ENCODE measurements at regions of chr3 and their contacts with region 1.

Region 1: GRCh38 chr3:183725387-183725786 is 27.8 kb downstream of the YEATS2 start:
- DNase-seq: no peak
- ATAC-seq: no peak
- H3K4me3 Mint-ChIP-seq: no peak overlapping the region
- H3K27ac Mint-ChIP-seq: no peak overlapping the region
- H3K4me1 Mint-ChIP-seq: no peaks in the 10 kb centered on the region
- H3K27me3 Mint-ChIP-seq: no peaks in the 10 kb centered on the region

Region 2: DNA sequence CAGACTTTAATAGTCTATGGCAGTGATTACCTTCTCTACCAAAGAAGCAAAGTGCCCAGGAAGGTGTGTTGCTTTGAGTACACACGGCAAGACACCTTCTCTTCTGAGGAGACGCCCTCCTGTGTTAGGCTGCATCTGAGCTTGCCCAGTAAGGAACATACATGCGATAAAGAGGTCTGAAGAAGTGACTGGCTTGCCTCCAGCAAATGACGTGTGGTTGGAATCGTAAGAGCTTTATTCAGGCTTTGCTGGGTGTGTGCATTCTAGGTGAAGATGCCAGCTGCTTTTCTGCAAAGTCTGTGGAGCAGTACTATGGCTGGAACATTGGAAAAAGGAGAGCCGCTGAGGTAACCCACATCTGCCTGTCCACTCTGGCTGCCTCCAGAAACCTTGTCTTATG is 77.6 kb after region 1 on chr3:
- CTCF ChIA-PET with region 1: no interaction called
- POLR2A ChIA-PET with region 1: no interaction called
- intact Hi-C with region 1: loop called in 1 of 2 experiments (anchors 5 kb)
- DNase-seq: no peak
- ATAC-seq: no peak
- H3K4me3 Mint-ChIP-seq: no peak overlapping the region
- H3K27ac Mint-ChIP-seq: peak overlapping the region; percentile 32
- H3K4me1 Mint-ChIP-seq: no peaks in the 10 kb centered on the region
- H3K27me3 Mint-ChIP-seq: no peaks in the 10 kb centered on the region